HEK293 (cell line): ENCODE measurements at regions of chr11 and their contacts with region 1.

Region 1: DNA sequence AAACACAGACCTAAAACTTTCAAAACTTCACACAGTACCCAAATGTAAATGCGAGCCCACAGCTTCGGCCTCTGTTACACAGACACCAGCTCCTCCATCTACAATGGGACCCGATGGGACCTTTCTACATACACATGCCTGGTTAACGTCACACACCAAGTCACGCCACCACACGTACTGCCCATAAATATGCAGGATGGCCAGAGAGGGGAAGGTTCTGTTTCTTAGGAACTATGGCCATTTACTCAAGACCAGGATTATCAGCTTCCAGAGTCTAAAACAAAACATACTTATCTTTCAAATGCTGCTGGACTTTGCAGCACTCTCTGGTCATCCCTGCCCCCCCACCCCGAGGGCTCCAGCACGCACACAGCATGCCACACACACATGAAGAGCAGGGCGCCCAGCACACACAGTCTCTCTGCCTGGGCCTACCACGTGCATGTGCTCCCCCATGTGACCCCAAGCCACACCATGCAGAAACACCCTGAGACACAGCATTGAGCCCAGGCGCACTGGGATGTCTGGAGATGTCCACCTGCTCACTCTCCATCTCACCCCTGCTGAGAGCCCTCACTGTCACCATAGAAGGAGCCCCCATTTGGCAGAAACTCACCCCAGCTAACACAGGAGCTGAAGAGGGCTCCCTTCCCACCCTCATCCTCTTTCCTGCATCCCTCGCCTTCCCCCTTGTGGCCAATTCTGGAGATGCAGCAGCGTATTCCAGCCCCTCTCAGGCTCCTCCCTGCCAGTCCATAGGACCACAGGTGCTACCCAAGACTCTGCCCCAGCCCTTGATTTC is 61.8 kb downstream of the SLC22A12 start:
- H3K4me3 ChIP-seq: no peak overlapping the region
- H3K27ac ChIP-seq: no peak overlapping the region
- H3K4me1 ChIP-seq: no peaks in the 10 kb centered on the region
- CTCF ChIP-seq: peak; percentile 81

Region 2: GRCh38 chr11:64489831-64490441 is 162.9 kb before region 1 on chr11:
- CTCF ChIA-PET with region 1: interaction called, 90 read pairs
- POLR2A ChIA-PET with region 1: no interaction called
- H3K4me3 ChIP-seq: no peak overlapping the region
- H3K27ac ChIP-seq: no peak overlapping the region
- H3K4me1 ChIP-seq: no peaks in the 10 kb centered on the region
- CTCF ChIP-seq: peak; percentile 56

Region 3: GRCh38 chr11:64594159-64594935 is 58.4 kb before region 1 on chr11:
- CTCF ChIA-PET with region 1: no interaction called
- POLR2A ChIA-PET with region 1: no interaction called
- H3K4me3 ChIP-seq: no peak overlapping the region
- H3K27ac ChIP-seq: no peak overlapping the region
- H3K4me1 ChIP-seq: no peaks in the 10 kb centered on the region
- CTCF ChIP-seq: no peak

Region 4: DNA sequence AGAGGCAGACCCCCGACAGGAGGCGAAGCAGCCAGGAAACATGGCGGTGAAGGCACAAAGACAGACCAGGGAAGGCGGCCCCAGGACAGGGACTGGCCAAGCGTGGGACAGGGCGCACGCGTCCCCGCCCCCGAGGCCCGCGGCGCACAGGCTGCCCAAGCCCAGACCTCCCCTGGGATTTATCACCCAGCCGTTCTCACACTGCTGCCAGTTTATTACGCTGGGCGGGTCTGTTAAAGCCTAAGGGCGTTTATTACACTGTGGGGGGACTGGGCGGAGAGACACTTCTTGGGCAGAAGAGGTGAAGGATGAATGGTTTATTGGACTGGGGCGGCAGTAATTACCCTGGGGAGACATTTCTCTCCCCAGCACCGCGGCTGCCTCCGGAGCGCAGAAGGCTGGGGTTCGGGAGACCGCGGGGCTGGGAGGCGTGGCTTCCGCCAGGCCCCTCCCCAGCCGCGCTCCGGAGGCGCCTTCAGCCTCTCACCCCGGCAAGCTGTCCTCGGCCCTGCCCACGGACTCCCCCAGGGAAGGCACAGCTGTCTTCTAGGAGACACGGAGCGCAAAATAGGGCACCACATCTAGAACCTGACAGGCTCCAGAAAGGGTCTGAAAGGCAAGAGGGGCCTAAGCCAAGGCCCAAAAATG is 14.6 kb before region 1 on chr11:
- CTCF ChIA-PET with region 1: interaction called, 13 read pairs
- POLR2A ChIA-PET with region 1: no interaction called
- H3K4me3 ChIP-seq: no peak overlapping the region
- H3K27ac ChIP-seq: no peak overlapping the region
- H3K4me1 ChIP-seq: no peaks in the 10 kb centered on the region
- CTCF ChIP-seq: no peak

Region 5: GRCh38 chr11:64665411-64665821 is 12.6 kb after region 1 on chr11:
- CTCF ChIA-PET with region 1: interaction called, 19 read pairs
- POLR2A ChIA-PET with region 1: no interaction called
- H3K4me3 ChIP-seq: no peak overlapping the region
- H3K27ac ChIP-seq: no peak overlapping the region
- H3K4me1 ChIP-seq: no peaks in the 10 kb centered on the region
- CTCF ChIP-seq: no peak